ENCODE measurements at regions of chr4 and their contacts with region 1.

Region 1: DNA sequence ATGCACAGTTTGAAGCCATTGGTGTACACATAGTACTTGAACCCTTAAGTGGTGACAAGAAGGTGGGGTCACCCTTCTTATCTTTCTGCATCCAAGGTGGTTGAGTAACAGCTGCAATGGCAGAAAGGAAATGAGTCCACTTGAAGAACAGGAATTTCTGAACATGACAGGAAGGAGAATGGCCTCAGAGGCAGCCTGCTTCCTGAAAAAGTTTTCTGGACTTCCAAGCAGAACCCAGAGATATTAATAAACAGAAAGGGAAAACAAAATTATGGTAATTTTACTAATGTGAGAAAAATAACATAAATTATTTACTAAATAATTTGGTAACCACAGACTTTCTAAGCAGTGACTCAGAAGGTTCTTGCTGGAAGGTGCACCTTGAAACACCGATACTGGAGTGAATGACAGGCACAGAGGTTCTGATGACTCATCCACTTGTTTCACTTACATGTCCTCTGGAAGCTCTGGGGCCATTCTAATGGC is 119.9 kb upstream of the HS3ST1 start:
- DNase-seq: peak; percentile 95
- ATAC-seq: peak; percentile 84
- H3K4me3 ChIP-seq: no peak overlapping the region
- H3K27ac ChIP-seq: peak overlapping the region; percentile 96
- H3K4me1 ChIP-seq: peaks cover 61 to 70% of the 10 kb centered on the region in 2 experiments
- H3K27me3 ChIP-seq: no peaks in the 10 kb centered on the region
- CTCF ChIP-seq: no peak
- POLR2A ChIP-seq: no peak
- RAD21 ChIP-seq: peak; percentile 23; the same call in 1 of the 2 replicates

Region 2: DNA sequence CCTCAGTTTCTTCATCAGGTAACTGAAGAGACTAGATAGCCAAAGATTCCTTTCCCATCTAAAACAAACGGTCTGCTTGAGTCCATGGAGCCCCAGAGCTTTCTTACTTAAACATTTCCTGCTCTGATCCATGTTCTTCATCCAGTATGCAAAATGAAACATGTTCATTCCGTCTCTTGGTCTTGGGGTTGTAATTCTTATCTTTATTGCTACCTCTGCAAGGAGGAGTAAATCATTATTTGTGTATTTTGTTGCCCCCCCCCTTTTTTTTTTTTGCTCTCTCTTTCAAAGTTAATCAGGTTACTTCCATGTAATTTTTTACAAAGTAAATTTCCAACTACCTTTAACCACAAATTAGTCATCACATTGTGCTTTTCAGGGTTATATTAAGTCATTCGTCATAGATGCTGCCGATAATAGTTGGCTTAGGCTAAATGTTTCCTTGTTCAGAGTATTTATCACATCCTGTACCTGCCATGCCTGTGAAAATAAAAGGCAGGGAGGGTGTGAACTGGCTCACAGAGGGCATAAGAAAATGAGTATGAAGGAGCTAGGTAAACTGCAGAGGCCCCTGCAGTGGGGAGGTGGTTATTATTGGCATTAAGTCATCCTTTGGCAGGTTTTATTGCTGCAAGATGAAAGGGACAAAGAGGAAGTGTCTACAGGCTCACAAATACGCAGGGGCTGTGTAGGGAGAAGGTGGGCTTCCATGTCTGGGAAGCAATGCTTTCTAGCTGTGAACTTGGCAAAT is 43.2 kb before region 1 on chr4:
- CTCF ChIA-PET with region 1: no interaction called
- POLR2A ChIA-PET with region 1: interaction called, 10 read pairs
- RAD21 ChIA-PET with region 1: no interaction called
- intact Hi-C with region 1: loop called (anchors 2 kb)
- DNase-seq: peak; percentile 99
- ATAC-seq: peak; percentile 89
- H3K4me3 ChIP-seq: no peak overlapping the region
- H3K27ac ChIP-seq: peak overlapping the region; percentile 88
- H3K4me1 ChIP-seq: peaks cover 53 to 58% of the 10 kb centered on the region in 2 experiments
- H3K27me3 ChIP-seq: no peaks in the 10 kb centered on the region
- CTCF ChIP-seq: no peak
- POLR2A ChIP-seq: no peak
- RAD21 ChIP-seq: no peak

Region 3: GRCh38 chr4:11614399-11614798 is 65.8 kb after region 1 on chr4:
- CTCF ChIA-PET with region 1: no interaction called
- POLR2A ChIA-PET with region 1: no interaction called
- RAD21 ChIA-PET with region 1: no interaction called
- intact Hi-C with region 1: loop called (anchors 10 kb)
- DNase-seq: peak; percentile 90
- ATAC-seq: peak; percentile 86
- H3K4me3 ChIP-seq: peak overlapping the region in 1 of 2 experiments; percentile 37; a peak in 2 of 4 replicates
- H3K27ac ChIP-seq: peak overlapping the region; percentile 98
- H3K4me1 ChIP-seq: peaks cover 76 to 92% of the 10 kb centered on the region in 2 experiments
- H3K27me3 ChIP-seq: no peaks in the 10 kb centered on the region
- CTCF ChIP-seq: no peak
- POLR2A ChIP-seq: no peak
- RAD21 ChIP-seq: no peak

Region 4: DNA sequence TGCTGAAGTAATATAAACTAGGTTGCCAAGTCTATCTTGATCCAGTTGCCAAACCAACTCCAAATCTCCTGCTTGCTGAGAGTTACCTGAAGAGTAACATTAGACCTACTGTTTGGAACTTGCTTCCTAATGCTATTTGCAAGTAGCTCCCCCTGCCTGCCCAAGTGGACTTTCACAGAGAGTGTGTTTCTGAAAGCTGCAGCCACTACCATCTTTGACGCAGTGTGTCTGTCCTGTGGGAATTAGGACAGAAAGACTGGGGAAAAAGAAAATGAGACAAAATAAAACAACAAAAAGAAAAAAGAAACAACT is 75.0 kb after region 1 on chr4:
- CTCF ChIA-PET with region 1: interaction called, 5 read pairs
- POLR2A ChIA-PET with region 1: interaction called, 14 read pairs
- RAD21 ChIA-PET with region 1: interaction called in 1 of 2 experiments, 9 read pairs
- intact Hi-C with region 1: loop called (anchors 10 kb)
- DNase-seq: no peak
- ATAC-seq: peak; percentile 49
- H3K4me3 ChIP-seq: no peak overlapping the region
- H3K27ac ChIP-seq: peak overlapping the region; percentile 94
- H3K4me1 ChIP-seq: peaks cover 58 to 87% of the 10 kb centered on the region in 2 experiments
- H3K27me3 ChIP-seq: no peaks in the 10 kb centered on the region
- CTCF ChIP-seq: peak in 2 of 3 experiments; percentile 63 to 67; a peak in 4 of 6 replicates
- POLR2A ChIP-seq: no peak
- RAD21 ChIP-seq: no peak

Region 5: GRCh38 chr4:11698846-11699590 is 150.4 kb after region 1 on chr4:
- CTCF ChIA-PET with region 1: no interaction called
- POLR2A ChIA-PET with region 1: interaction called, 3 read pairs
- RAD21 ChIA-PET with region 1: no interaction called
- intact Hi-C with region 1: loop called (anchors 5 kb)
- DNase-seq: peak; percentile 95
- ATAC-seq: peak; percentile 87
- H3K4me3 ChIP-seq: peak overlapping the region in 1 of 2 experiments; percentile 3; a peak in 1 of 4 replicates
- H3K27ac ChIP-seq: peak overlapping the region; percentile 97
- H3K4me1 ChIP-seq: peaks cover 51 to 81% of the 10 kb centered on the region in 2 experiments
- H3K27me3 ChIP-seq: no peaks in the 10 kb centered on the region
- CTCF ChIP-seq: no peak
- POLR2A ChIP-seq: peak; percentile 22
- RAD21 ChIP-seq: peak; percentile 37; the same call in 1 of the 2 replicates